Activated CD8-positive, alpha-beta T cell treated with anti-CD3 and anti-CD28 coated beads for 36 hours (primary cell): ENCODE measurements at regions of chr22 and their contacts with region 1.

Region 1: GRCh38 chr22:36977947-36978660 is 41.1 kb downstream of the TST start:
- DNase-seq: peak; percentile 94
- ATAC-seq: peak; percentile 87
- H3K4me3 Mint-ChIP-seq: peak overlapping the region; percentile 77
- H3K27ac Mint-ChIP-seq: peak overlapping the region; percentile 91
- H3K4me1 Mint-ChIP-seq: peaks cover 8% of the 10 kb centered on the region
- H3K27me3 Mint-ChIP-seq: peaks cover 2% of the 10 kb centered on the region
- CTCF ChIP-seq: peak; percentile 64

Region 2: GRCh38 chr22:36757668-36758211 is 220.4 kb before region 1 on chr22:
- CTCF ChIA-PET with region 1: interaction called, 35 read pairs
- POLR2A ChIA-PET with region 1: no interaction called
- intact Hi-C with region 1: no loop called
- DNase-seq: peak; percentile 90
- ATAC-seq: peak; percentile 98
- H3K4me3 Mint-ChIP-seq: no peak overlapping the region
- H3K27ac Mint-ChIP-seq: no peak overlapping the region
- H3K4me1 Mint-ChIP-seq: no peaks in the 10 kb centered on the region
- H3K27me3 Mint-ChIP-seq: peaks cover 1% of the 10 kb centered on the region
- CTCF ChIP-seq: peak; percentile 83

Region 3: GRCh38 chr22:36781656-36782627 is 196.2 kb before region 1 on chr22:
- CTCF ChIA-PET with region 1: interaction called, 35 read pairs
- POLR2A ChIA-PET with region 1: interaction called, 4 read pairs
- intact Hi-C with region 1: loop called (anchors 5 kb)
- DNase-seq: peak; percentile 95
- ATAC-seq: peak; percentile 98
- H3K4me3 Mint-ChIP-seq: peak overlapping the region; percentile 53
- H3K27ac Mint-ChIP-seq: peak overlapping the region; percentile 94
- H3K4me1 Mint-ChIP-seq: peaks cover 34% of the 10 kb centered on the region
- H3K27me3 Mint-ChIP-seq: no peaks in the 10 kb centered on the region
- CTCF ChIP-seq: peak; percentile 92

Region 4: DNA sequence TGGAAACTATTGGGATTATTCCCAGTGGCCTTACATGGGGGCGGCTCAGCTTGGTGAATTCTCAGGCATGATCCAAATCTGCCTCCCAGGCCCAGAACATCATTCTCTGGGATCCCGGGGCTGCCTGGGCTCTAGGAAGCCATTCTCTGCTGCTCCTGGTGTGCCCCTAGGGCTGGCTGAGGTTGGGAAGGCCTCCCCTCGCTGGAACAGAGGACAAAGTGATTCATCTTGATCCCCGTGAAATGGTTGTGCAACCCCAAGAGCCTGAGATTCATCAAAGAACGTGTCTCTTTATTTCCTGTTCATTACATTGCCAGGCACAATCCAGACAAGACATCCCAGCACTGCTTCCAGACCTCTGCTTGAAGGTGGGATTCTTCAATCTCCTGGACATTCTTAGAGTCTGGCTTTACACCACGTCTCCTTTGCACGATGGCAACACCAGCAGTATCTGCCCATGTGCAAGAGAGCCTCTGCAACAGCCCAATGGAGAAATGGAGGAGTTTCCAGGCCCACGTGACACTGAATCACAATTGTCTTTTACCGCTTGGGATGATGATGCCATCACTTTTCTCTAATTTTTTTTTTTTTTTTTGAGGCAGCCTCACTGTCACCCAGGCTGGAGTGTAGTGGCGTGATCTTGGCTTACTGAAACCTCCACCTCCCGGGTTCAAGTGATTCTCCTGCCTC is 11.1 kb before region 1 on chr22:
- CTCF ChIA-PET with region 1: interaction called, 50 read pairs
- POLR2A ChIA-PET with region 1: interaction called, 3 read pairs
- intact Hi-C with region 1: no loop called
- DNase-seq: no peak
- ATAC-seq: no peak
- H3K4me3 Mint-ChIP-seq: no peak overlapping the region
- H3K27ac Mint-ChIP-seq: no peak overlapping the region
- H3K4me1 Mint-ChIP-seq: no peaks in the 10 kb centered on the region
- H3K27me3 Mint-ChIP-seq: no peaks in the 10 kb centered on the region
- CTCF ChIP-seq: no peak

Region 5: GRCh38 chr22:37019309-37020125 is 41.4 kb after region 1 on chr22 and contains the starts of genes MPST and TST:
- CTCF ChIA-PET with region 1: interaction called, 10 read pairs
- POLR2A ChIA-PET with region 1: interaction called, 3 read pairs
- intact Hi-C with region 1: no loop called
- DNase-seq: peak; percentile 31
- ATAC-seq: peak; percentile 73
- H3K4me3 Mint-ChIP-seq: peak within 1 kb of the TSS; percentile 81
- H3K27ac Mint-ChIP-seq: peak within 1 kb of the TSS; percentile 69
- H3K4me1 Mint-ChIP-seq: peaks cover 6% of the 10 kb centered on the region
- H3K27me3 Mint-ChIP-seq: peaks cover 21% of the 10 kb centered on the region
- CTCF ChIP-seq: peak; percentile 6
- total RNA-seq, gene MPST: 8.5 to 9.1 TPM
- total RNA-seq, gene TST: 1.2 to 1.8 TPM

Region 6: GRCh38 chr22:37113757-37114156 is 135.7 kb after region 1 on chr22:
- CTCF ChIA-PET with region 1: no interaction called
- POLR2A ChIA-PET with region 1: no interaction called
- intact Hi-C with region 1: no loop called
- DNase-seq: no peak
- ATAC-seq: no peak
- H3K4me3 Mint-ChIP-seq: no peak overlapping the region
- H3K27ac Mint-ChIP-seq: no peak overlapping the region
- H3K4me1 Mint-ChIP-seq: peaks cover 36% of the 10 kb centered on the region
- H3K27me3 Mint-ChIP-seq: no peaks in the 10 kb centered on the region
- CTCF ChIP-seq: no peak